MCF 10A (cell line): ENCODE measurements at regions of chr4 and their contacts with region 1.

Region 1: GRCh38 chr4:52659001-52659721 is at the start of gene USP46:
- DNase-seq: peak; percentile 76
- H3K4me3 Mint-ChIP-seq: peak within 1 kb of the TSS; percentile 77
- H3K27ac Mint-ChIP-seq: peak within 1 kb of the TSS; percentile 26
- H3K4me1 Mint-ChIP-seq: peaks cover 34% of the 10 kb centered on the region
- H3K27me3 Mint-ChIP-seq: no peaks in the 10 kb centered on the region
- CTCF ChIP-seq: no peak
- total RNA-seq, gene USP46: 16.8 and 23.0 TPM in 2 replicates

Region 2: DNA sequence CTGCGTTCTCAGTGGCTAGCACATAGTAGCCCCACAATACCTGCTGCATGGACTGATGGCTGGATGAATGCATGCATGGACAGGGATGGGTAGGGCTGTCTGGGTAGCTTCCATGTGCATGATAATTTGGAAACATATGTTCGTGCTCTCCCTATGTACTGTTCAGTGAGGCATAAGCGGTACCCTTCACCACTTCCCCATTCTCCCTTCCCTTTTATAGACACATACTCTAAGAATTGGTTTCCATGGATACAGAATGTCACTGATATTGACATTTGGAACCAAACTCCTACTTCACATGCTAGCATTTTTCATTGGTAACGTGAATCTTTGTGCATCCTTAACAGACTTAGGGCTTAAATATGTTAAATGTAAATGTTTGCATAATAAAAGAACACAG is 20.4 kb before region 1 on chr4:
- CTCF ChIA-PET with region 1: interaction called, 24 read pairs
- POLR2A ChIA-PET with region 1: interaction called, 25 read pairs
- intact Hi-C with region 1: no loop called
- DNase-seq: no peak
- H3K4me3 Mint-ChIP-seq: no peak overlapping the region
- H3K27ac Mint-ChIP-seq: no peak overlapping the region
- H3K4me1 Mint-ChIP-seq: peaks cover 48% of the 10 kb centered on the region
- H3K27me3 Mint-ChIP-seq: no peaks in the 10 kb centered on the region
- CTCF ChIP-seq: no peak

Region 3: DNA sequence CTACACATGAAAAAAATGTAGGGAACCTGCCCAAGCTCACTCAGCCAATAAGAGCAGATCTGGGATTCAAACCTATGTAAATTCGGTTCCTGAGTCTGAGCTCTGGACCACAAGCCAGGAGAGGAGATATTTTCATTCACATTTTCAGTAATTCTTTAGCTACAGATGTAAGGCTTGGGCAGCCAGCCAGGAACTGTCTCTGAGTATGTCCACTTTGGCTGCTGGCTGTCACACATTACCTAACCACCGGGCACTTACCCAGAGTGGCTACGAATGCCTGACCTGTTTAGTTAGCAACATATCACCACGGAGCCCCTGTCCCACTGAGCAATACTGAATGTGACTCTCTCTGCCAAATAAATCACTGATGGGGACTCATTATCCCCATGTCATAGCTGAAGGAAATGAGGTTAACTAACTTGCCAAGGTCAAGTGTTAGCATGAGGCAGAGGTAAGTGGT is 15.3 kb before region 1 on chr4:
- CTCF ChIA-PET with region 1: interaction called, 24 read pairs
- POLR2A ChIA-PET with region 1: interaction called, 25 read pairs
- intact Hi-C with region 1: no loop called
- DNase-seq: peak; percentile 75
- H3K4me3 Mint-ChIP-seq: no peak overlapping the region
- H3K27ac Mint-ChIP-seq: no peak overlapping the region
- H3K4me1 Mint-ChIP-seq: peaks cover 32% of the 10 kb centered on the region
- H3K27me3 Mint-ChIP-seq: no peaks in the 10 kb centered on the region
- CTCF ChIP-seq: no peak

Region 4: GRCh38 chr4:52648836-52649235 is 10.3 kb before region 1 on chr4:
- CTCF ChIA-PET with region 1: interaction called, 24 read pairs
- POLR2A ChIA-PET with region 1: interaction called, 13 read pairs
- intact Hi-C with region 1: no loop called
- DNase-seq: no peak
- H3K4me3 Mint-ChIP-seq: no peak overlapping the region
- H3K27ac Mint-ChIP-seq: no peak overlapping the region
- H3K4me1 Mint-ChIP-seq: peaks cover 12% of the 10 kb centered on the region
- H3K27me3 Mint-ChIP-seq: no peaks in the 10 kb centered on the region
- CTCF ChIP-seq: no peak